Naive thymus-derived CD4-positive, alpha-beta T cell (primary cell): ENCODE measurements at regions of chr12 and their contacts with region 1.

Region 1: DNA sequence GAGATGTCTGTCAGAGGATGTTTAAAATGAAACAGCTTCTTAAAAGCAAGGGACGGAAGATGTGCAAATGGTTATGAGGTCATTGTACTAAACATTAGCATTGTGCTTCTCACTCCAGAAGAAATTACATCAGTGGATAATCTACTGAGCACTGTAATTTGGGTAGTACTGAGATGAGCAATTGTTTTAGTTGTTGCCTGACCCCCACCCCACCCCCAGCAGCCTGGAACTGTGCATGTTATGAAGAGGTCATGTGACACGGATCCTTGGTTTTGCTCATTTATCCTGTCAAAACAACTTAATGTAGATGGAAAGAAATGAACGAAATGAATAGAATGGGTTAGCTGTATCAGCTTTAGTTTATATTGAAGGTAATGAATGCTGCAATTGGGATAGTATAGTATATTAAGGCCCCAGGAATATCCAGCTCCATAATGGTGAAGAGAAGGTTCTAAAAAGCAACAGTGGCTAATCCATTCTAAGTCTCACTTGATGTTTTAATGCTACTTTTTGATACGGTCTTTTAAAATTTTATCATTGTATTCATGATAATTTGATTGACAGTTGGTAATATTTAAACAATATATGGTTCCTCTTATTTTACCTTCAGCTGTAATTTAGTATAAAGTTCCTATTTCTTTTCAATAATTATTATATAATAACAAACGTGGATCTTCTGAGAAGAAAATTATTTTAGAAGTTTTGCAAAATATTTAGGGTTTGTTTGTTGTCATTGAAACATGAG is 58.5 kb downstream of the WNK1 start:
- DNase-seq: peak in 1 of 9 donors; percentile 47
- ATAC-seq: no peak
- H3K4me3 ChIP-seq: no peak overlapping the region
- H3K4me3 Mint-ChIP-seq: peak overlapping the region in 6 of 10 donors; percentile 0 to 49 (median 26)
- H3K27ac ChIP-seq: peak overlapping the region; percentile 25
- H3K27ac Mint-ChIP-seq: peak overlapping the region; percentile 11 to 78 (median 64)
- H3K4me1 ChIP-seq: peaks cover 29 to 50% of the 10 kb centered on the region in 2 donors
- H3K4me1 Mint-ChIP-seq: peaks cover 44 to 84% (median 74%) of the 10 kb centered on the region in 7 donors
- H3K27me3 ChIP-seq: no peaks in the 10 kb centered on the region
- H3K27me3 Mint-ChIP-seq: no peaks in the 10 kb centered on the region

Region 2: DNA sequence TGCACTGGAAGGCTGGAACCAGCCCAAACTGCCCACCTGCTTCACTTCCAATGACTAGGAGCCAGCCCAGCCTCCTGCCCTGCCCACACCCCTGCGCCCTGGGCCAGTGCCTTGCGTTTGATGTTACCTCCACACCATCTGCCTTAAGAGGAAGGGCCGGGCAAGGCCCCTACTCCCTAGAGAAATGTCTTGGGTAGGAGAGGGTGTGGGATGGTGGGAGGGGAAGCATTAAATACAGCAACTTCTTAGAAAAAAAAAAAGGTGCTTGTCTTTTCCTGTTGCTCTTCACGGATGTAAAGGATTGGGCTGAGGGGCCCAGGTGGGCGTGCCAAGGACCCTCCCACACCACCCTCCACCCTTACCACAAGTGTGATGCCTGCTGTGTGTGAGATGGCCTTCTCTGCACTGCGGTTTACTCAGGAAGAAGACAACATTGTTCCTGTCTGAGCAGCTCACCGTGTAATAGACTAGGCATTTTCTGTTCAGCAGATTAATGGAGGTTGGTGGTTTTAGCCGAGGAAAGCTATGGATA is 247.5 kb before region 1 on chr12:
- CTCF ChIA-PET with region 1: interaction called, 20 read pairs
- POLR2A ChIA-PET with region 1: no interaction called
- intact Hi-C with region 1: no loop called
- DNase-seq: peak in 8 of 9 donors; percentile 54 to 89 (median 85)
- ATAC-seq: peak; percentile 91
- H3K4me3 ChIP-seq: peak overlapping the region; percentile 49
- H3K4me3 Mint-ChIP-seq: peak overlapping the region; percentile 73 to 98 (median 85)
- H3K27ac ChIP-seq: peak overlapping the region; percentile 80
- H3K27ac Mint-ChIP-seq: peak overlapping the region; percentile 84 to 96 (median 94)
- H3K4me1 ChIP-seq: peaks cover 49 to 71% of the 10 kb centered on the region in 2 donors
- H3K4me1 Mint-ChIP-seq: peaks cover 60 to 98% (median 92%) of the 10 kb centered on the region in 7 donors
- H3K27me3 ChIP-seq: no peaks in the 10 kb centered on the region
- H3K27me3 Mint-ChIP-seq: no peaks in the 10 kb centered on the region

Region 3: GRCh38 chr12:575948-576612 is 234.8 kb before region 1 on chr12:
- CTCF ChIA-PET with region 1: interaction called, 43 read pairs
- POLR2A ChIA-PET with region 1: interaction called, 4 read pairs
- intact Hi-C with region 1: loop called (anchors 1 kb)
- DNase-seq: peak; percentile 63 to 97 (median 83)
- ATAC-seq: peak; percentile 99
- H3K4me3 ChIP-seq: no peak overlapping the region
- H3K4me3 Mint-ChIP-seq: peak overlapping the region; percentile 14 to 70 (median 56)
- H3K27ac ChIP-seq: no peak overlapping the region
- H3K27ac Mint-ChIP-seq: peak overlapping the region in 7 of 9 donors; percentile 44 to 89 (median 76)
- H3K4me1 ChIP-seq: peaks cover 11 to 16% of the 10 kb centered on the region in 2 donors
- H3K4me1 Mint-ChIP-seq: peaks cover 10 to 38% (median 19%) of the 10 kb centered on the region in 7 donors
- H3K27me3 ChIP-seq: no peaks in the 10 kb centered on the region
- H3K27me3 Mint-ChIP-seq: peaks cover 0 to 1% (median 0%) of the 10 kb centered on the region in 5 donors

Region 4: GRCh38 chr12:597926-598568 is 212.8 kb before region 1 on chr12:
- CTCF ChIA-PET with region 1: no interaction called
- POLR2A ChIA-PET with region 1: no interaction called
- intact Hi-C with region 1: no loop called
- DNase-seq: no peak
- ATAC-seq: no peak
- H3K4me3 ChIP-seq: no peak overlapping the region
- H3K4me3 Mint-ChIP-seq: no peak overlapping the region
- H3K27ac ChIP-seq: no peak overlapping the region
- H3K27ac Mint-ChIP-seq: no peak overlapping the region
- H3K4me1 ChIP-seq: no peaks in the 10 kb centered on the region
- H3K4me1 Mint-ChIP-seq: peaks cover 0 to 8% (median 0%) of the 10 kb centered on the region in 7 donors
- H3K27me3 ChIP-seq: no peaks in the 10 kb centered on the region
- H3K27me3 Mint-ChIP-seq: peaks cover 0 to 5% (median 0%) of the 10 kb centered on the region in 5 donors

Region 5: DNA sequence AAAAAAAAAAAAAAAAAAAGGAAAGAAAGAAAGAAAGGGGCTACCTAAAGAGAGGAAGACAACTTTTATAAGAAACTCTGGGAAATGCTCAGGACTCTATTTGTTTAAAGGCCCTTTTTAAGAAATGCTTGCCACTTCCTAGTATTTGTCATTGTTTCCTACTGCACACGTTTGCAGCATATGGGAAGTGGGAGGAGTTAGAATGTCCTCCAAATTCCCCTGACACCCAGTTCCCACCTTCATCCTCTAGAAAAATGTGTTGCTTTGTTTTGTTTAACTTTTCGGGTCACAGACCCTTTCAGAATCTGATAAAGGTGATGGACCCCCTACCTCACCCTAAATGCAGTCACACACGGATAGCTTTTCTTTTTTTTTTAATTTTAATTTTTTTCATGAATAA is 188.4 kb before region 1 on chr12:
- CTCF ChIA-PET with region 1: interaction called, 48 read pairs
- POLR2A ChIA-PET with region 1: interaction called, 5 read pairs
- intact Hi-C with region 1: no loop called
- DNase-seq: no peak
- ATAC-seq: peak; percentile 58
- H3K4me3 ChIP-seq: no peak overlapping the region
- H3K4me3 Mint-ChIP-seq: peak overlapping the region; percentile 51 to 85 (median 63)
- H3K27ac ChIP-seq: no peak overlapping the region
- H3K27ac Mint-ChIP-seq: peak overlapping the region in 8 of 9 donors; percentile 56 to 96 (median 74)
- H3K4me1 ChIP-seq: peaks cover 0 to 20% of the 10 kb centered on the region in 2 donors
- H3K4me1 Mint-ChIP-seq: peaks cover 29 to 56% (median 51%) of the 10 kb centered on the region in 7 donors
- H3K27me3 ChIP-seq: no peaks in the 10 kb centered on the region
- H3K27me3 Mint-ChIP-seq: no peaks in the 10 kb centered on the region

Region 6: DNA sequence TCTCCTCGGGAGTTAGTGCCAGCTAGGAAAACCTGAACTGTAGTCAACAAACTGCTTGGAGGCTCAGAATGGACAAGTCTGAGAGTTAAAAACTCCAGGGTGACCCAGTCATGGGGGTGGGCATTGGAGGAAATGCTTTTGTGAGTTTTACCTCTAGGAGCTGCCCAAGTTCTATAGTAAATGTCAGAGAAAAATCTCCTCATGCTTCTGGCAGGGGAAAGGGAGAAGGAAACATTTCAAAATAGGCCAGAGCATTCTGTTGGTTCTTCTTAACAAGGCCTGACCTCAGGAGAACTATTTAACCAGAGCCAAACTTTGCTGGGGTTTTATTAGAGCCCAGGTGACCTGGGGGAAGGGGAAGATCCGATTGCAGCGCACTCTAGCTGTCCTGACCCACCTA is 159.9 kb before region 1 on chr12:
- CTCF ChIA-PET with region 1: interaction called, 4 read pairs
- POLR2A ChIA-PET with region 1: no interaction called
- intact Hi-C with region 1: loop called in 1 of 2 experiments (anchors 1 kb)
- DNase-seq: peak in 2 of 9 donors; percentile 37 to 41
- ATAC-seq: no peak
- H3K4me3 ChIP-seq: no peak overlapping the region
- H3K4me3 Mint-ChIP-seq: no peak overlapping the region
- H3K27ac ChIP-seq: no peak overlapping the region
- H3K27ac Mint-ChIP-seq: peak overlapping the region in 1 of 9 donors; percentile 13
- H3K4me1 ChIP-seq: no peaks in the 10 kb centered on the region
- H3K4me1 Mint-ChIP-seq: peaks cover 2 to 21% (median 10%) of the 10 kb centered on the region in 7 donors
- H3K27me3 ChIP-seq: no peaks in the 10 kb centered on the region
- H3K27me3 Mint-ChIP-seq: no peaks in the 10 kb centered on the region

Region 7: GRCh38 chr12:779745-780734 is 30.8 kb before region 1 on chr12:
- CTCF ChIA-PET with region 1: interaction called, 7 read pairs
- POLR2A ChIA-PET with region 1: no interaction called
- intact Hi-C with region 1: loop called (anchors 5 kb)
- DNase-seq: no peak
- ATAC-seq: no peak
- H3K4me3 ChIP-seq: no peak overlapping the region
- H3K4me3 Mint-ChIP-seq: peak overlapping the region; percentile 24 to 83 (median 72)
- H3K27ac ChIP-seq: no peak overlapping the region
- H3K27ac Mint-ChIP-seq: peak overlapping the region in 8 of 9 donors; percentile 32 to 79 (median 66)
- H3K4me1 ChIP-seq: peaks cover 23 to 49% of the 10 kb centered on the region in 2 donors
- H3K4me1 Mint-ChIP-seq: peaks cover 39 to 85% (median 78%) of the 10 kb centered on the region in 7 donors
- H3K27me3 ChIP-seq: no peaks in the 10 kb centered on the region
- H3K27me3 Mint-ChIP-seq: no peaks in the 10 kb centered on the region

Region 8: DNA sequence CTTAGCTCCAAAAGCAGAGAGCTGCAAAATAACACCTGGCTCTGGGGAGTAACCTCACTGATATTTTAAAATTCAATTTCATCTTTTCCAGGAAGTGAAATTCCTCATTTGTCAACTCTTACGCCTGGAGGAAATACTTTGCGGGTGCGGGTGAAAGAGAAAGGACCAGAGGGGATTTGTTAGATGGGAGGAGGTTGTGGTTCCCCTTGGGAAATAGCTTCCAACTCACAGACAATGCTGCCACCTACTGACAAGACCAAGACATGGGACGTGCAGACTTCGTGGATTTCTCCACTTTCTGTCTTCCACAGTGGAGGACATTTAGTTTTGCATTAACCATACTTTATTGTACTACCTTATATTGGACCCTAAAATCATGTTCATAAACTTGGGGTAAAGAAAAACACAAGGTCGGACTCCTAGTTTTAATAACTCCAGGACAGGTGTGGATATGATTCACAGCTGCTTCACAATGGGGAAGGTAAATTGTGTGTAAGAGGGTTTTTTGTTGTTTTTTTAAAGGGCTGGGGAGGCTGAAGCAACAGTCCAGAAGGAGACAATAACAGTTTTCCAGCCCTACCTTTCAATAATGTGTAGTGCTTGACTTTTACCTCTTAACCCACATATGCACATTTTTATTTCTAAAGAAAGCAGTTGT is 772.7 kb after region 1 on chr12:
- CTCF ChIA-PET with region 1: interaction called, 4 read pairs
- POLR2A ChIA-PET with region 1: no interaction called
- intact Hi-C with region 1: loop called in 1 of 2 experiments (anchors 1 kb)
- DNase-seq: peak in 8 of 9 donors; percentile 42 to 73 (median 64)
- ATAC-seq: peak; percentile 84
- H3K4me3 ChIP-seq: no peak overlapping the region
- H3K4me3 Mint-ChIP-seq: peak overlapping the region in 4 of 10 donors; percentile 17 to 64 (median 44)
- H3K27ac ChIP-seq: no peak overlapping the region
- H3K27ac Mint-ChIP-seq: peak overlapping the region in 6 of 9 donors; percentile 1 to 66 (median 48)
- H3K4me1 ChIP-seq: peaks cover 6 to 13% of the 10 kb centered on the region in 2 donors
- H3K4me1 Mint-ChIP-seq: peaks cover 15 to 26% (median 23%) of the 10 kb centered on the region in 7 donors
- H3K27me3 ChIP-seq: no peaks in the 10 kb centered on the region
- H3K27me3 Mint-ChIP-seq: peaks cover 0 to 3% (median 0%) of the 10 kb centered on the region in 5 donors